Right lobe of liver (tissue), 6 donors: ENCODE measurements at regions of chr3 and their contacts with region 1.

Region 1: GRCh38 chr3:124786441-124787241 is 56.4 kb downstream of the UMPS start:
- DNase-seq: no peak
- ATAC-seq: peak; percentile 55 to 69 (median 64)
- H3K4me3 ChIP-seq: no peak overlapping the region
- H3K27ac ChIP-seq: peak overlapping the region in 1 of 3 donors; percentile 13
- H3K4me1 ChIP-seq: peaks cover 0 to 12% (median 6%) of the 10 kb centered on the region in 4 donors
- H3K27me3 ChIP-seq: no peaks in the 10 kb centered on the region
- CTCF ChIP-seq: peak; percentile 29 to 52 (median 42)
- POLR2A ChIP-seq: no peak

Region 2: GRCh38 chr3:124878561-124879336 is 92.1 kb after region 1 on chr3:
- intact Hi-C with region 1: no loop called
- DNase-seq: peak in 1 of 3 donors; percentile 55
- ATAC-seq: peak; percentile 88 to 92 (median 92)
- H3K4me3 ChIP-seq: no peak overlapping the region
- H3K27ac ChIP-seq: peak overlapping the region; percentile 41 to 66 (median 48)
- H3K4me1 ChIP-seq: peaks cover 0 to 26% (median 16%) of the 10 kb centered on the region in 4 donors
- H3K27me3 ChIP-seq: no peaks in the 10 kb centered on the region
- CTCF ChIP-seq: no peak
- POLR2A ChIP-seq: peak; percentile 64

Region 3: GRCh38 chr3:124903907-124904834 is 117.5 kb after region 1 on chr3:
- intact Hi-C with region 1: loop called in 1 of 2 experiments (anchors 5 kb)
- DNase-seq: no peak
- ATAC-seq: no peak
- H3K4me3 ChIP-seq: no peak overlapping the region
- H3K27ac ChIP-seq: no peak overlapping the region
- H3K4me1 ChIP-seq: peaks cover 0 to 10% (median 0%) of the 10 kb centered on the region in 4 donors
- H3K27me3 ChIP-seq: no peaks in the 10 kb centered on the region
- CTCF ChIP-seq: no peak
- POLR2A ChIP-seq: no peak